Gastrocnemius medialis (tissue), 4 donors: ENCODE measurements at regions of chr3 and their contacts with region 1.

Region 1: DNA sequence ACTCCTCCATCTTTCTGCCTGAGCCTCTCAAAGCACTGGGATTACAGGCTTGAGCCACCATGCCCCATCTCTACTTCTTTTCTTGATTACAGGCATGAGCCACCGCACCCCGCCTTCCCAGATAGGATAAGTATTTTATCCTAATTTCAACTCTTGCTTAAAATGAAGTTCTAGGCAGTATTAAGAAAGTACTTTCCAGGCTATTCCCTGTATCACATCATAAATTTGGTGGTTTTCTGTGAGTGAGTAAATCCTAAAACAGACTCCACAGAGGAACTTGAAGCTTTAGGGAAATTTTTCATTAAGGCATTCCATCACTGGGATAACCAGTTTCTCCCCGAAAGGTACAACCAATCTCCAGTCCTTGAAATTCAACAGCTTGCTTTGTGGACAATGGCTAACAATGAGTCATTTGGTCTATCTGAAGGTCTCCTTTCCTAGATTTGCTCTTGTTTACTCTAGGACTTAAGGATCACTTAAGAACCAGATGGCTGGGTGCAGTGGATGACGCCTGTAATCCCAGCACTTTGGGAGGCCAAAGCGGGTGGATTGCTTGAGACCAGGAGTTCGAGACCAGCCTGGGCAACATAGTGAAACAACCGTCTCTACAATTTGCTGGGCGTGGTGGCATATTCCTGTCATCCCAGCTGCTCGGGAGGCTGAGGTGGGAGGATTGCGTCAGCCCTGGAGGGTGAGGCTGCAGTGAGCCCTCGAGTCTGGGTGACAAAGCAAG is 49.7 kb upstream of the SKIL start:
- DNase-seq: no peak
- ATAC-seq: no peak
- H3K4me3 ChIP-seq: no peak overlapping the region
- H3K27ac ChIP-seq: no peak overlapping the region
- H3K4me1 ChIP-seq: no peaks in the 10 kb centered on the region
- H3K27me3 ChIP-seq: no peaks in the 10 kb centered on the region
- CTCF ChIP-seq: no peak
- POLR2A ChIP-seq: no peak

Region 2: DNA sequence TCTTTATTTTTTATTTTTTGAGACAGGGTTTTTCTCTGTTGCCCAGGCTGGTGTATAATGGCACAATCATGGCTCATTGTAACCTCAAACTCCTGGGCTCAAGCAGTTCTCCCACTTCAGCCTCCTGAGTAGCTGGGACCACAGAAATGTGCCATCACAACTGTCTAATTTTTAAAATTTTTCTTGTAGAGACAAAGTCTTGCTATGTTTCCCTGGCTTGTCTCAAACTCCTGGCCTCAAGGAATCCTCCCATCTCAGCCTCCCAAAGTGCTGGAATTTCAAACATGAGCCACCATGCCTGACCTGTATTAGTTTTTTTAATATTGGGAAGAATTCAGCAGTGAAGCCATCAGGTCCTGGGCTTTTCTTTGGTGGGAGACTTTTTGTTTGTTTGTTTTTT is 97.3 kb after region 1 on chr3:
- in situ Hi-C with region 1: loop called (anchors 5 to 10 kb)
- intact Hi-C with region 1: loop called (anchors 1 kb)
- DNase-seq: no peak
- ATAC-seq: no peak
- H3K4me3 ChIP-seq: no peak overlapping the region
- H3K27ac ChIP-seq: no peak overlapping the region
- H3K4me1 ChIP-seq: no peaks in the 10 kb centered on the region
- H3K27me3 ChIP-seq: no peaks in the 10 kb centered on the region
- CTCF ChIP-seq: no peak
- POLR2A ChIP-seq: no peak

Region 3: GRCh38 chr3:170689893-170690660 is 382.2 kb after region 1 on chr3:
- in situ Hi-C with region 1: loop called in 2 of 4 experiments (anchors 25 kb)
- intact Hi-C with region 1: no loop called
- DNase-seq: peak in 1 of 2 donors; percentile 38
- ATAC-seq: peak in 1 of 2 donors; percentile 65
- H3K4me3 ChIP-seq: no peak overlapping the region
- H3K27ac ChIP-seq: no peak overlapping the region
- H3K4me1 ChIP-seq: peaks cover 0 to 7% of the 10 kb centered on the region in 2 donors
- H3K27me3 ChIP-seq: no peaks in the 10 kb centered on the region
- CTCF ChIP-seq: peak in 4 of 5 experiments; percentile 23 to 71 (median 53)
- POLR2A ChIP-seq: no peak

Region 4: DNA sequence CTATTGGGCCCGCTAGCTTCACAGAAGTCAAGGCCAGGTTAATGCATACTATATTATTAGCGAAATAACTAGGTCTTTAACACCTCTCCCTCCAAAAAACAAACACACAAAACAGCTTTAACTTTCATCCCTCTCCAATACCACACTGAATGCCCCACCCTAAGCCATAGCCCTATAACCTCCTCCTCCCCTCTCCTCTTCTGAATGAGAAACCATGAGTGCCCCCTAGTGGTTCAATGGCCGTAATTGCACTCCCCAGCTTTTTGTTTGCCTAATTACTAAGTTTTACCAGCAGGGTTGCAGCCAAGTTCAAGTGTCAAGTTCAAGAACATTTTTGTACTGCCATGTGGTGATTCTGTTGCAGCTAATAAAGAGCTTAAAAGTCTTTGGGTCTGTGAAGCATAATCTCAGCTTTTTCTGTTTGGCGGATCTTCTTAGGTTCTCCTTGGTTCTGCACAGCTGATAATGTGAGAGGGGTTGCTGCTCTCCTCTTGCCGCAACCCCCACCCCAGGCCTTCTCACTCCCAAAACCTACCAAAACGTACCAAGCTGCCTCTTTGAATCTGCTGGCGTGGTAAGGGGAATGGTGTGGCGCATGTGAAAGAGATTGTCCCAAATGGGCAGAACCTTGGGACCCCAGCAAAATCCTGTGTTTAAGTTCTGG is 504.2 kb after region 1 on chr3:
- in situ Hi-C with region 1: loop called (anchors 10 to 25 kb)
- intact Hi-C with region 1: loop called (anchors 5 kb)
- DNase-seq: peak; percentile 17 to 29
- ATAC-seq: peak; percentile 65 to 66
- H3K4me3 ChIP-seq: no peak overlapping the region
- H3K27ac ChIP-seq: no peak overlapping the region
- H3K4me1 ChIP-seq: no peaks in the 10 kb centered on the region
- H3K27me3 ChIP-seq: no peaks in the 10 kb centered on the region
- CTCF ChIP-seq: peak; percentile 70 to 80 (median 75)
- POLR2A ChIP-seq: no peak